OCI-LY7 (cell line): ENCODE measurements at regions of chr9 and their contacts with region 1.

Region 1: GRCh38 chr9:117782931-117783788 is 79.0 kb downstream of the TLR4 start:
- DNase-seq: peak; percentile 77
- H3K4me3 ChIP-seq: peak overlapping the region; percentile 38
- H3K27ac ChIP-seq: peak overlapping the region; percentile 1
- H3K4me1 ChIP-seq: peaks cover 14% of the 10 kb centered on the region
- CTCF ChIP-seq: peak; percentile 93

Region 2: DNA sequence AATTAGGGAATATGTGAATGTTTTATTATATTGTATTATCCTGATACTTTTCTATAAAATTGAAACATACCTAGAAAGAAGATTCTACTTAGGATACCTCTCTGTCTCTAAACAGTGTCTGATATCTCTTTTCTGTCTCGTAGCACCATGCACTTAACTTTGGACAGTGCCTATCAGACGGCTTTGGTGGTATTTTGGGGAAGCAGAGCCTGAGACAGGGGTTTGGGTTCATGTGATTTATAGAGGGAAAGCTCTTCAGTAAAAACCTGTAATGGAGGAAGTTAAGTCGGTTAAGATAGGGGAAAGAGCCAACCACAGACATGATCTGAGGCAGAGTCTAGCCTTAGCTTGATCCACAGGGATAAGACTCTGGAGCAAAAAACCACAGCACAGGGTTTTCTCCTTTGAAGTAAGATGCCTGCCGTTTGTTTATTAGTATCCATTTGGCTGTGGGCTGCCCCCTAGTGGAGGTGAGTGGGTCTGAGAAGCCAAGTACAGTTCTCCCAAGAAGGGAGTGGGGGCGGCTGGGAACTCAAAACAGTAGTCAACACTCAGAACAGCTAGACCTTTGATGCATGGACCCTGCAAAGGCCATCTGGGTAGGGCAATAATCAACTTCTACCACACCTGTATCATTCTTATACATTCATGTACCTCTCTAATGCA is 227.1 kb before region 1 on chr9:
- CTCF ChIA-PET with region 1: no interaction called
- POLR2A ChIA-PET with region 1: no interaction called
- intact Hi-C with region 1: no loop called
- DNase-seq: peak; percentile 44
- H3K4me3 ChIP-seq: no peak overlapping the region
- H3K27ac ChIP-seq: no peak overlapping the region
- H3K4me1 ChIP-seq: no peaks in the 10 kb centered on the region
- CTCF ChIP-seq: peak; percentile 84

Region 3: DNA sequence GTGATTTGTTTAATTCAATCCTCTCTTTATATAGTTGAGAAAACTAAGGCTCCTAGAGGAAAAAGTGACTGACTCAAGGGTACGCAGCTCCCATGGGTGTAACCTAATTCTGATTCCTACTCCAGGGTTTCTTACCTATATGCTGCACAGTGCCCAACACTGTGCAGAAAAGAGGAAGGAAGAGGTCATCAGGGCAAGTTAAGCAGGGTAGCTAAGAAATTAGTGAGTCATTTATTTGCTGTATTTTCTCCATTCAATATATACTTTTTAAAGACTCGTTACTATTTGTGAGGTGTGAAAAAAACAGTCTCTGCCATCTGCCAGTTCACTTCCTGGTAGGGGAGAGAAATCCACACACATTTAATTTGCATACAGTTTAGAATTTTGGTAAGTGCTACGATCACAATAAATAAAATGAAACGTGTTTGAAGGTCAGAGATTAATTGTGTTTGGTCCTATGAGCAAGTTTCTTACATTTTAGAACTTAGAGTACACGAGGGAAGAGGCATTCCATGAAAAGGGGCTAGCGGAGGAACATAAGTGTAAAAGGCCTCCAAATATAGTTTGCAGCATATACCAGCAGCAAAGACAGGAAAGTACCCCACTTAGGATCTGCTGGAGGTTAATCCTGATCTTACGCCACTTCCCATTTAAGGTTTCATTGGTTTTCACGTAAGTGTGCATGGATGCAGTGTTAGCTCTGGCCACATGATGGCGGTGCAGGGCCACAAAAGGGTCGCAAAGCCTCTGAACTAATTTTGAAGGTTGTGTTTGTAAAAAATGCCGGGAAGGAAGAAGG is 138.8 kb before region 1 on chr9:
- CTCF ChIA-PET with region 1: no interaction called
- POLR2A ChIA-PET with region 1: no interaction called
- intact Hi-C with region 1: loop called (anchors 1 kb)
- DNase-seq: peak; percentile 74
- H3K4me3 ChIP-seq: peak overlapping the region; percentile 32
- H3K27ac ChIP-seq: no peak overlapping the region
- H3K4me1 ChIP-seq: peaks cover 12% of the 10 kb centered on the region
- CTCF ChIP-seq: peak; percentile 99

Region 4: DNA sequence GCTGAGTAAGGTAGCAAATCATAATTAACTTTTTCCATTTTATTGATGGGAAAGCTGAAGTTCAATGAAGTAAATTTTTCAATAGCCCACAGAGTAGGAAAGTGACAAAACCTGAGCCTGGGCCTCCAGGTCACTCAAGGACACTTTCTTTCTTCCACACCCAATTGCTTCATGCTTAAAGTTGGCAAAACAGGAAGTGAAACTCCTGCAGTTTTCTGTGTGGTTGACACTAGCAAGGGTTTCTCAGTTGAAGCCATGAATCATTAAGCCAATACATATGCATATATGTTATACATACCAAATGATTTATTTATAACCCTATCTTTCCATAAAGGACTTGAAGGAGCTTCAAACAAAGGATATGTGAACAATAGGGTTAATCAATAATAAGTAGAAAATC is 65.1 kb before region 1 on chr9:
- CTCF ChIA-PET with region 1: no interaction called
- POLR2A ChIA-PET with region 1: no interaction called
- intact Hi-C with region 1: loop called (anchors 5 kb)
- DNase-seq: peak; percentile 87
- H3K4me3 ChIP-seq: no peak overlapping the region
- H3K27ac ChIP-seq: no peak overlapping the region
- H3K4me1 ChIP-seq: peaks cover 19% of the 10 kb centered on the region
- CTCF ChIP-seq: no peak

Region 5: DNA sequence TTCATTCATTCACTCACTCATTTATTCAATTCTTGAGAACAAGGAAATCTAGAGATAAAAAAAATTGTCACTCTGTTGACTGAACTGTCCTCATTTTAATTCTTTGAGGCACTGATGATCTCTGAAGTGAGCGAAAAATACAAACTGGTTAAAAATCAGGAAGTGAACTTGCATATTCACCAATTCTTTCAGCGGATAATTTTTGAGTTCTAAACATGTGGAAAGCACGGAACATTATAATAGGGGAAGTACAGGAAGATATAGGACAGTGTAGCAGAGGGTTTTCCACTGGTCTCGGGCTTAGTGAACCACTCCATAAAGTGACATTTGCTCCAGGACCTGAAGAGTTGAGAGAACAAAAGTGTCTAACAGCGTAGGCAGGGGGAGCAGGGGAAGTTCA is 90.5 kb after region 1 on chr9:
- CTCF ChIA-PET with region 1: no interaction called
- POLR2A ChIA-PET with region 1: no interaction called
- intact Hi-C with region 1: no loop called
- DNase-seq: no peak
- H3K4me3 ChIP-seq: no peak overlapping the region
- H3K27ac ChIP-seq: no peak overlapping the region
- H3K4me1 ChIP-seq: no peaks in the 10 kb centered on the region
- CTCF ChIP-seq: no peak

Region 6: GRCh38 chr9:117936185-117937130 is 153.3 kb after region 1 on chr9:
- CTCF ChIA-PET with region 1: no interaction called
- POLR2A ChIA-PET with region 1: interaction called, 3 read pairs
- intact Hi-C with region 1: loop called (anchors 2 kb)
- DNase-seq: peak; percentile 84
- H3K4me3 ChIP-seq: peak overlapping the region; percentile 36
- H3K27ac ChIP-seq: peak overlapping the region; percentile 82
- H3K4me1 ChIP-seq: peaks cover 21% of the 10 kb centered on the region
- CTCF ChIP-seq: no peak

Region 7: DNA sequence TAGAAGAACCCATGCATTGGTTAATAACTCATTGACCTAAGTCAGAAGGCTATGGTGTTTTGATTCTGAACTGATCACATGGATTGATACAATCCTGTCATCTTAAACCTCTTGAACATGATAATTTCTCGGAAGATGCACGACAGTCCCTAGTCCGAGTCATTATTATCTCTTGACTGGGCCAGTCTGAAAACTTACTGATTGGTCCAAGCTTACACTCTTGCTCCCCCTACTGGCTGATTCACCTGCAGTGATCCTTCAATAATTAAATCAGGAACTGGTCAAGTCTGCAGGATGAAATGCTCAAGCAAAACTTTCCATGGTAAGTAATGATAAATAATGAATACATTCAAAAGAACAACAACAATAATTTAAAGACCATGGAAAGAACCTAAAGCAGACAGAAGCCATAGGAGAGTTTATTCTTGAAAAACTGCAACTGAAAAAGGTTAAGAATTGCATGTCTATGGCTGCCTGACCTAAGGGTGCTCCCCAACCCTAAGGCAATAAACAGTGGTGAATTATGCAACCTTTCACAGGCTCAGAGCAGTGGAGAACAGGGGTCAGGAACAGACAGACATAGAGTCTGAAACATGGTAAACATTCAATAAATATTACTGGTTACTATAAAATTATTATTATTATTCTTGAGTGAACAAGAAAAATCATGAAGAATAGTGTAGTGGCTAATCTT is 1506.7 kb after region 1 on chr9:
- CTCF ChIA-PET with region 1: no interaction called
- POLR2A ChIA-PET with region 1: no interaction called
- intact Hi-C with region 1: loop called (anchors 1 kb)
- DNase-seq: peak; percentile 65
- H3K4me3 ChIP-seq: no peak overlapping the region
- H3K27ac ChIP-seq: no peak overlapping the region
- H3K4me1 ChIP-seq: no peaks in the 10 kb centered on the region
- CTCF ChIP-seq: peak; percentile 93

Region 8: DNA sequence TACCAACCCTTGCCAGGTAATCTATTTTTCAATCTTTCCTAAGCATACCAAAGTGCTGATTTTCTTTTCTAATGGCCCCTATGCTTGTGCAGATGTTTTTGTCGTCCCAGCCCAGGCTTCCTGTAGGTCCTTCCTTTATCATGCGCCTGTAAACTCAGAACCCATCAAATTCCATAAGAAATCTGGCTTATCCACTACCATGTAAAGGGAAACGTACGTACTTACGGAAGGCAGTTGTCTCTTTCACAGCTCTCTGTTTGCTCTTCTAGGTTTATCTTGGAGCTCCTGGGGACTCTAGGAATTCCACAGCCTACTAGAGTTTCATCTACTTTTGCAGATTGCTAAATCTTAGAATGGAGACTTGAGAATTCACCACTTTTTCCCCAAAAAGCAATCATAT is 1577.1 kb after region 1 on chr9:
- CTCF ChIA-PET with region 1: no interaction called
- POLR2A ChIA-PET with region 1: no interaction called
- intact Hi-C with region 1: loop called (anchors 5 kb)
- DNase-seq: no peak
- H3K4me3 ChIP-seq: no peak overlapping the region
- H3K27ac ChIP-seq: no peak overlapping the region
- H3K4me1 ChIP-seq: no peaks in the 10 kb centered on the region
- CTCF ChIP-seq: no peak